ENCODE measurements at regions of chr15 and their contacts with region 1.

Region 1: DNA sequence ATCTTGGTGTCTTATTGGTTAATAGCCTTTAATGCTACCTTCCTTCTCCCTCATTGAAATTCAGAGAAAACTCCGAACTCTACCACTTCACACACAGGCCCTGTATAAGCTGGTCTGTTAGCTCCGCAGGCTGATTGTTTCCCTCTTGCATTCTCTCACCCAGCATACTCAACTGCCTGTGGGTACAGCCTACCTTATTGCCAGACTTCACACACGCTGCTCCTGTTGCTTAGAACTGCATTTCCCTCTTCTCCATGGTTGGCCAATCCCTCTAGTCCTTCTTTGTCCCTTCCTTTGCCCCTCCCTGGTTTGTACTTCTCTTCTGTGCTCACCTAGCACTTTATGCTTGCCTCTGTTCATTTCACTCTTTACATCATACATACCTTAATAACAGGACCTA is 92.9 kb upstream of the PRTG start:
- DNase-seq: no peak
- H3K4me3 ChIP-seq: no peak overlapping the region
- H3K27me3 ChIP-seq: no peaks in the 10 kb centered on the region
- CTCF ChIP-seq: no peak

Region 2: DNA sequence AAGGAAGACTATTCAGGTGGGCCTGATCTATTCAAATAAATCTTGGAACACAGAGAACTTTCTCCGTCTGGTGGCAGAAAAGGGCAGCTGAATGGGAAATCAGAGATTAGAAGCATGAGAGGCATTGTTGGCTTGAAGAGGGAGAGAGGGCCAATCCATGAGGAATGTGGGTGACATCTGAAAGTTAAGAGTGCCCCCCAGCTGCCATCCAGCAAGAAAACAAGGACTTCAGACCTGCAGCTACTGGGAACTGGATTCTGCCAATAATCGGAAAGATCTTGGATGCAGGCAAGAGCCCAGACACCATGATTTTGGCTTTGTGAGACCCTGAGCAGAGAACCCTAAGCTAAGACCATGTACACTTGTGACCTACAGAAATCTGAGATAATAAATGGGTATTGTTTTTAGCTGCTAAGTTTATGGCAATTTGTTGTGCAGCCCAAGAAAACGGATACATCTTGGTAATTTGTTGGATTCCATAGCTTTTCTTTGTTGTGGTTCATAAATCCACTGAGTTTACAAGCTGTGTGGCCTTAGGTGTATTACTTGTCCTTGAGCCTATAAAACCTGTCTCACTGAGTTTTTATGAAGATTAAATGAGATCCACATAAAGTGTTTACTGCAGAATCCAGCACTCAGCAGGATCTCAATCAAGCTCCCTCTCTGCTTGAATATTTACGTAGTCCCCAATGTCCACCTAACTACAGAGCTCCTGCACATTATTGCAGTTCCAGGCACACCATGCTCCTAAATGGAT is 10.8 kb before region 1 on chr15:
- CTCF ChIA-PET with region 1: interaction called, 10 read pairs
- POLR2A ChIA-PET with region 1: no interaction called
- DNase-seq: no peak
- H3K4me3 ChIP-seq: no peak overlapping the region
- H3K27me3 ChIP-seq: no peaks in the 10 kb centered on the region
- CTCF ChIP-seq: no peak

Region 3: DNA sequence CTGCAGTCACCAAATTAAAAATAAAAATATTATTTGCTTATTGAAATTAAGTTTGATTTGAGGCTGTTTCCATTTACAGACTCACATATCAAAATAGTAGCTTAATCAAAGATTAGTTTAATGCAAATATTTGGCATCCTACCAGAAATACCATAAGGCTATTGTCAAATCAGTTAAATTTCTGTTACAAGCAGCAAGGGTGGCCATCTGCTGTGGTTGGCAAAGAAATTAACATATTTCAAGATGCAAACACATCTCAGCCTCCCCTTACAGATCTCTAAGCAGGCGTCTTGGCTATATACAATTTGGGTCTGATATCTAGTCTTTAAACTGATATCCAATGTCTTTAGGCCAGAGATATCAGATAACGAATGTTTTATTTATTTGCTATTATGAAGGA is 240.8 kb after region 1 on chr15:
- CTCF ChIA-PET with region 1: no interaction called
- POLR2A ChIA-PET with region 1: no interaction called
- DNase-seq: no peak
- H3K4me3 ChIP-seq: no peak overlapping the region
- H3K27me3 ChIP-seq: no peaks in the 10 kb centered on the region
- CTCF ChIP-seq: no peak